ENCODE measurements at regions of chr22 and their contacts with region 1.

Region 1: GRCh38 chr22:31630331-31631329 is 31.4 kb downstream of the PISD start:
- DNase-seq: peak; percentile 31 to 52
- ATAC-seq: peak; percentile 43 to 53
- H3K4me3 ChIP-seq: peak overlapping the region; percentile 75 to 82 (median 78)
- H3K27ac ChIP-seq: peak overlapping the region; percentile 67 to 84 (median 79)
- H3K4me1 ChIP-seq: peaks cover 50 to 55% of the 10 kb centered on the region in 2 donors
- H3K27me3 ChIP-seq: no peaks in the 10 kb centered on the region
- CTCF ChIP-seq: no peak
- POLR2A ChIP-seq: peak; percentile 12 to 41

Region 2: DNA sequence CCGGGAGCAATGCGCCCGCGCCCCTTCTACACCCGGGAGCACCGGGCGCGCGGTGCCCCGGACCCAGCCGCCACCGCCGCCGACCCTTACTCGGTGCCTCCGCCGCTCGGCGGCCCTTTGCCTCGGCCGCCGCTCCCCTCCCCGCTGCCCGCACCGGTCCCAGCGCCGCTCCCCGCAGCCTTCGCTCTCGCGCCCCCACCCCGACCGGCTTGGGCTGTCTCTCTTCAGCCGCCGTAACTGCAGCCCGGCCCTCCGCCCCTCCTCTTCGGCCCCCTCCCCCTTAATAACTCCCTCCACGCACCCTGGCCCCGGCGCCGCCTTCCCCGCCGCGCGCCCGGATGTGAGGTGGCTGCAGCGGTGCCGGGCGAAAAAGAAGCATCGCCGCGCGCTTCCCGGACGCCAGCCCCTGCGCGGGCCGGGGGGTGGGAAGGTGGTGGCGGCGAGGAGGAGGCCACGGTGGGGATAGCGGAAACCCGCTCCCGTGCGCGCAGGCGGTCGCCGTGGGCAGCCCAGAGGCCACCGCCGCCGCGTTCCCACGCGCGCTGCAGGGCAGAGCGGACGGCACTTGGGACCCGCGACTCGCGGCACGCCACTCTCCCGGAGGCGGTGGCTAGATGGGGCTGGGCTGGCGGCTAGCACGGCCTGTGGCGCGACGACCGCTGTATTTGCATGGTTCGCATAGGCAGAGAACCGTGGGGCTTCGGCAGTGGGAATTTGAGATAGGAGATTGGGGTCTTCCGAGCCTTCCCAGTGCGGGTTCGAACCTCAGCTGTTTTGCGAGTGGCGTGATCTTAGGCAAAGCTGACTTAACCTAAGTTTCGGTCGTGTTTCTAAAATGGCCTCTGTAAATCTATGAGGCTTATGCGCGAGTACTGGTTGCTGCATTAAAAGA is 140.8 kb before region 1 on chr22 and contains the start of gene EIF4ENIF1:
- in situ Hi-C with region 1: no loop called
- intact Hi-C with region 1: loop called (anchors 5 kb)
- DNase-seq: peak; percentile 81 to 84
- ATAC-seq: peak; percentile 84 to 91
- H3K4me3 ChIP-seq: peak within 1 kb of the TSS; percentile 61 to 83 (median 78)
- H3K27ac ChIP-seq: peak within 1 kb of the TSS; percentile 86 to 99 (median 94)
- H3K4me1 ChIP-seq: peaks cover 22 to 31% of the 10 kb centered on the region in 2 donors
- H3K27me3 ChIP-seq: no peaks in the 10 kb centered on the region
- CTCF ChIP-seq: peak in 2 of 5 experiments; percentile 16 to 25
- POLR2A ChIP-seq: peak; percentile 71 to 75
- total RNA-seq, gene EIF4ENIF1: 10.1 to 19.6 (median 15.1) TPM

Region 3: GRCh38 chr22:31556627-31557203 is 73.9 kb before region 1 on chr22:
- in situ Hi-C with region 1: loop called in 1 of 4 experiments (anchors 5 kb)
- intact Hi-C with region 1: loop called (anchors 1 kb)
- DNase-seq: no peak
- ATAC-seq: no peak
- H3K4me3 ChIP-seq: no peak overlapping the region
- H3K27ac ChIP-seq: no peak overlapping the region
- H3K4me1 ChIP-seq: no peaks in the 10 kb centered on the region
- H3K27me3 ChIP-seq: no peaks in the 10 kb centered on the region
- CTCF ChIP-seq: peak in 4 of 5 experiments; percentile 17 to 45 (median 37)
- POLR2A ChIP-seq: no peak

Measured in gastrocnemius medialis (tissue), 4 donors.